Heart left ventricle (tissue), 16 donors: ENCODE measurements at regions of chr20 and their contacts with region 1.

Region 1: DNA sequence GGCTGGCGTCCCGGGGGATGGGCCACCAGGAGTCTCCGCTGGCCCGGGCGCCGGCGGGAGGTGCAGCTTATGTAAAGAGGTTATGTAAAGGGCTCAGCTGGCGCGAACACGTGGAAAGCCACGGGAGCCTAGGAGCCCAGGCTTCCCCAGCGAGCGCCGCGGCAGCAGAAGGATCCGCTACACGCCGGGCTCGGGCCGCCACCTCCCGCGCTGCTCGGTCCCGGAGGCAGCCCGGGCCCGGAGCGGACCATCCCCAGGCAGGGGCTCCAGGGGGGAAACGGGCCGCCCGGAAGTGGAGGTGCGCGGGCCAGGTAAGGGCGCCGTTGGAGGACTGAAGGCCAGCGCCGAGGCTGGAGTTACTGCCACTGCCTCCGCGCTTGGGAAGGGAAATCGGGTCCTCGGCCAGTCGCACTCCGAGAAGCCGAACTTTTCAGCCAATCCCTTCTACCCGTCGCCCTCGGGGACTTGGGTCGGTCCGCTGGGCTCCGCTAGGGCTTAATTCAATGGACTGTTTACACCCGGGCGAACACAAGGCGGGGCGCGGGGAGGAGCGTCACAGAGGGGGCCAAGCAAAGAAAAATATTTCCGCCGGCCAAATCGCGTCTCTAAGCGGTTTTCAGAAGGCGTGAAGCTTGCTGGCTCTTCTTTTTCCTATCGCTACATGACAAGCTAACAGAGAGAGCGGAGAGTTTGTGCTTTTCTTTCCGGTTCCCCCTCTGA is 398 bp downstream of the STK35 start:
- DNase-seq: peak; percentile 93 to 96 (median 94)
- ATAC-seq: peak; percentile 91 to 93 (median 92)
- H3K4me3 ChIP-seq: peak overlapping the region; percentile 60 to 98 (median 87)
- H3K27ac ChIP-seq: peak overlapping the region; percentile 95 to 100 (median 99)
- H3K4me1 ChIP-seq: peaks cover 3 to 47% (median 40%) of the 10 kb centered on the region in 12 donors
- H3K27me3 ChIP-seq: no peaks in the 10 kb centered on the region
- CTCF ChIP-seq: peak in 3 of 12 donors; percentile 7 to 24 (median 12)
- POLR2A ChIP-seq: peak in 1 of 2 donors; percentile 43

Region 2: DNA sequence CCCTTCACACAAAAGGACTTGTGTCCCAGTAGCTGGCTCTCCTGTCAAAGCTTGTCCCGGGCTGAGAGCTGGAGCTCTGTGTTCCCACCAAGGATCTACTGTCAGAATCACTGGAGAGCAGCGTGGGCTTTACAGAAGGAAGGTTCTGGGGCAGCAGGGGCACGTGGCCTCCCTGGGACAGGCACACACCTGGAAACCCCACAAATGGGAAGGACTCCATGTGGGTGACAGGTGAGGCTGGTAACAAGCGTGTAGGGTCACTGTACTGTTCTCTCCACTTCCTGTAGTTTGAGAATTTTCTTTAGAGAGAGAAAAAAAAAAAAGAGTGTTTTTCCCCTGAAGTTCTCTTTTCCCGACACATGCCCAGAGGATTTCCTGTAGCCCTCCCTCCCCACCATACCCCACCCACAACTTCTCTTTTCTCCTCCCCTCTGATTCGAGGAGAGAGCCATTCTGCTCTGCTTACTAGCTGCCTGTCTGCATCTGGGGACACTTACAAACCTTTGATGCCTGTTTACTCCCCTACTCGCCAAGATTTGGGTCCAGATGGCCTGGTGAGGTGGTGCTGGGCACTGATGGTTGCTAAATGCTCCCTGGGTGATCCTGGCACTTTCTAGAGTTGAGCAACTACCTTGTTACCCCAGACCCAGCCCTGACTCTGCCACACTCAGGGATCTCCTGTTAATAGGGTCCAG is 291.0 kb before region 1 on chr20:
- intact Hi-C with region 1: loop called in 1 of 10 experiments (anchors 5 kb)
- DNase-seq: peak in 3 of 5 donors; percentile 38 to 54 (median 44)
- ATAC-seq: peak; percentile 32 to 79 (median 65)
- H3K4me3 ChIP-seq: no peak overlapping the region
- H3K27ac ChIP-seq: peak overlapping the region; percentile 3 to 92 (median 72)
- H3K4me1 ChIP-seq: peaks cover 0 to 60% (median 36%) of the 10 kb centered on the region in 12 donors
- H3K27me3 ChIP-seq: no peaks in the 10 kb centered on the region
- CTCF ChIP-seq: no peak
- POLR2A ChIP-seq: no peak

Region 3: GRCh38 chr20:1900321-1900801 is 201.7 kb before region 1 on chr20:
- intact Hi-C with region 1: loop called in 2 of 10 experiments (anchors 10 kb)
- DNase-seq: peak; percentile 38 to 62 (median 49)
- ATAC-seq: peak; percentile 70 to 83 (median 82)
- H3K4me3 ChIP-seq: no peak overlapping the region
- H3K27ac ChIP-seq: peak overlapping the region in 7 of 12 donors; percentile 8 to 49 (median 41)
- H3K4me1 ChIP-seq: peaks cover 0 to 50% (median 28%) of the 10 kb centered on the region in 12 donors
- H3K27me3 ChIP-seq: no peaks in the 10 kb centered on the region
- CTCF ChIP-seq: peak in 11 of 12 donors; percentile 12 to 77 (median 48)
- POLR2A ChIP-seq: no peak

Region 4: GRCh38 chr20:2005831-2006426 is 96.1 kb before region 1 on chr20:
- intact Hi-C with region 1: no loop called
- DNase-seq: peak; percentile 60 to 80 (median 65)
- ATAC-seq: peak in 1 of 4 donors; percentile 44
- H3K4me3 ChIP-seq: no peak overlapping the region
- H3K27ac ChIP-seq: no peak overlapping the region
- H3K4me1 ChIP-seq: peaks cover 0 to 4% (median 0%) of the 10 kb centered on the region in 12 donors
- H3K27me3 ChIP-seq: peaks cover 0 to 42% (median 8%) of the 10 kb centered on the region in 9 donors
- CTCF ChIP-seq: no peak
- POLR2A ChIP-seq: no peak

Region 5: GRCh38 chr20:2022163-2022562 is 79.9 kb before region 1 on chr20:
- intact Hi-C with region 1: no loop called
- DNase-seq: no peak
- ATAC-seq: no peak
- H3K4me3 ChIP-seq: no peak overlapping the region
- H3K27ac ChIP-seq: no peak overlapping the region
- H3K4me1 ChIP-seq: no peaks in the 10 kb centered on the region
- H3K27me3 ChIP-seq: peaks cover 0 to 27% (median 0%) of the 10 kb centered on the region in 9 donors
- CTCF ChIP-seq: no peak
- POLR2A ChIP-seq: no peak

Region 6: DNA sequence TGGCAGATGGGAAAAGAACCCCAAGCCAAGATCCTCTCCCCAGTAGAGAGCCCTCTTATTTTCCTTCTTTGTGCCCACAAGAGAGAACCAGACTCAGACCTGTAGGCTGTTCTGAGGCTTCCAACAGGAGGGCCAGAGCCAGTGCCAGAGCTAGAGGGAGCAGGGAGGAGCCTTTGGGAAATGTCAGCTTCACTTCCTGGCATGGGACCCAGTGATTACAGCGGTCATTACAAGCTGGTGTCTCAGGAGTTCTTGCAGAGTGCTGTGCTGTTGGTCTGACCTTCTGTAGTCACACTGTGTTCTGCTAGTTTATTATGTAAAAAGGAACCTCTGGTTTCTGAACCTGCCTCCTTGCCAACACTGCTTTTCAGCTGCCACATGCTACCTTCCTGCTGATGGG is 38.5 kb after region 1 on chr20:
- intact Hi-C with region 1: loop called in 7 of 10 experiments (anchors 2 to 5 kb)
- DNase-seq: peak in 4 of 5 donors; percentile 67 to 92 (median 85)
- ATAC-seq: peak; percentile 89 to 90 (median 90)
- H3K4me3 ChIP-seq: no peak overlapping the region
- H3K27ac ChIP-seq: peak overlapping the region; percentile 56 to 89 (median 83)
- H3K4me1 ChIP-seq: peaks cover 3 to 97% (median 65%) of the 10 kb centered on the region in 12 donors
- H3K27me3 ChIP-seq: no peaks in the 10 kb centered on the region
- CTCF ChIP-seq: peak in 1 of 12 donors; percentile 11
- POLR2A ChIP-seq: no peak

Region 7: DNA sequence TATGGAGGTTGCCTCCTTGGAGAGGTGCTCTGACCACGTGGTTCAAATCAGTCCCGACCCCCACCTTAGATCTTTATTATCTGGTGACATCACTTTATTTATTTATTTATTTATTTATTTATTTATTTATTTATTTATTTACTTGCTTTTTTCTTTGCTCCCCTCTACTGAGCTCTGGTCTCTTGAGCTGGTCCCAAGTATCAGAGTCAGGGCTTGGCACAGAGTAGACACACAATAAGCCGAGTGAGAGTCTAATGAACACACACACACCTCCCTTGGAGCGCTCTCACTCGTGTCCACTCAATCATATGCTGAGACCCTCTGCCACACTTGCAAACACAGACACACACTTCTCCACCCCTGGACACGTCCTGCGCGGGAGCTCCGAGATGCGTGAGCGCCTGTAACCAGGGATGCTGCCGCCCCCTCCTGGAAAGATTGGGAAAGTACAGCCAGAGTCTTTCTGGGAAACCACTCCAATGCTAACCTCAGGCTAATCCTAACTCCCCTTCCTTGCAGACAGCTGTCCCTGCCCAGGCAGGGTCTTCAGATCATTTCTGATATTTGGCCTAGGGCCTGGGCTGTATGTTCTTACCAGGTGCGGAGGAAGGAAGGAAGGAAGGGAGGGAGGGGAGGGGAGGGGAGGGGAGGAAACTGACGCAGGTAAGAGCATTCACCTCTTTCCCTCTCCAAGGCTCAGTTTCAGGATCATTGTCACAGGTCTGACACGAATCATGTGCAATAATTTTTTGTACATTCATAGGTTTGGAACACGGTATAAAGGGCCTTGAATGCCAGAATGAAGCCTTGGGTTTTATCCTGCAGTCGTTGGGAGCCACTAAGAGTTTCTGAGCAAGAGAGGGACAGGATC is 70.5 kb after region 1 on chr20:
- intact Hi-C with region 1: loop called in 1 of 10 experiments (anchors 5 kb)
- DNase-seq: peak; percentile 66 to 84 (median 71)
- ATAC-seq: peak; percentile 52 to 88 (median 82)
- H3K4me3 ChIP-seq: no peak overlapping the region
- H3K27ac ChIP-seq: no peak overlapping the region
- H3K4me1 ChIP-seq: peaks cover 0 to 15% (median 2%) of the 10 kb centered on the region in 12 donors
- H3K27me3 ChIP-seq: no peaks in the 10 kb centered on the region
- CTCF ChIP-seq: peak; percentile 78 to 96 (median 90)
- POLR2A ChIP-seq: no peak